ENCODE measurements at regions of chr1 and their contacts with region 1.

Region 1: GRCh38 chr1:45569962-45570581 is 13.8 kb upstream of the NASP start:
- DNase-seq: peak; percentile 62 to 64
- H3K4me3 ChIP-seq: no peak overlapping the region
- H3K27ac ChIP-seq: no peak overlapping the region
- H3K4me1 ChIP-seq: peaks cover 3% of the 10 kb centered on the region; the same call in 1 of the 2 replicates
- H3K27me3 ChIP-seq: no peaks in the 10 kb centered on the region
- CTCF ChIP-seq: peak; percentile 99

Region 2: GRCh38 chr1:45359882-45360513 is 210.1 kb before region 1 on chr1:
- CTCF ChIA-PET with region 1: no interaction called
- POLR2A ChIA-PET with region 1: no interaction called
- intact Hi-C with region 1: loop called (anchors 1 kb)
- DNase-seq: peak; percentile 49 to 64
- H3K4me3 ChIP-seq: no peak overlapping the region
- H3K27ac ChIP-seq: no peak overlapping the region
- H3K4me1 ChIP-seq: peaks cover 21% of the 10 kb centered on the region
- H3K27me3 ChIP-seq: no peaks in the 10 kb centered on the region
- CTCF ChIP-seq: peak; percentile 84

Region 3: DNA sequence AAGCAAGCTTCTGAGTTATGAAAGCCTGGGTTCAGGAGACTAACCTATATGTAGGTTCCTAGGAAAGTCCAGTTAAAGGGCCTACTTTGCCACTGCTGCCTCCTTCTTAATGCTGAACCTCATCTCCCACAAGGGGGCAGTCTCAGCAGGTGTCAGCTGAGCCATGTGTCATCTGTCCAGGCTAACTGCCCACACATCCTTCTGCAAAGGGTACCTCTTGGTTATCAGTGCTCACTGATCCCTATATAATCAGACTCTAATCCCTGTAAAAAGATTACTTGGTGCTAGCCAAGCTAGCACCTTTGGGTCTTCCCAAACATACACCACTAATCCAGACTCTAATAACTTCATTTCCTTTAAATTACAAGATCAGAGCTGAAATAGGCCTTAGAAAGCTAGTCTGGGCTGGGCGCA is 57.4 kb before region 1 on chr1:
- CTCF ChIA-PET with region 1: interaction called, 5 read pairs
- POLR2A ChIA-PET with region 1: no interaction called
- intact Hi-C with region 1: loop called (anchors 1 kb)
- DNase-seq: peak; percentile 55 to 61
- H3K4me3 ChIP-seq: no peak overlapping the region
- H3K27ac ChIP-seq: no peak overlapping the region
- H3K4me1 ChIP-seq: peaks cover 20% of the 10 kb centered on the region
- H3K27me3 ChIP-seq: no peaks in the 10 kb centered on the region
- CTCF ChIP-seq: peak; percentile 80